Naive thymus-derived CD4-positive, alpha-beta T cell (primary cell): ENCODE measurements at regions of chr5 and their contacts with region 1.

Region 1: DNA sequence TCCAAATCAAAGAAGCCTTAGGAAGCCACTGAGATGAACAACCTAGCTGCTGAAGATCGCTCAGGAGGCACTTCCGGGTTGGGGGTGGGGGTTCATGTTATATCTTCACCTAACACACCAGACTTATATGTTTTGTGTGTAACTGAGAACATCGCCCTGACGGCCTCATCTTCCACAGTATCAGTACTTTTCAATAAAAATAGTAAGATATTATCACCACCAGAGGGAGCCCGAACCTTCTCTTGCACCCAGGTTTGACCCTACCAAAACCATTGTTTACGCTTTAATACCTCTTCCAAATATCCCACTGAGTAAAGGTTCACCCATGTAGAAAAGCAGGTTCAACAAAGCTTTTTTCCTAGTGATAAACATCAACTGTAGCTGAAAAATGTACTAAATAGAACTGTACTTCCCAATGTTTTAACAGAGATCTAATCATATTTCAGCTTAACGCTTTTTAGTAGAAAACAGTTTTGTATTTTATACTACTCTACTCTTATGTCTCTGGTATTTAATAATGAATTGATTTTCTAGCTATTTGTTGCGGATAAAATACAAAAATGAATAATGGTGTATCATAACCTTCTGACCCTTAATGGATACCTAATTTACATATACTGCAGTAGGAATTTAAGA is 244.0 kb downstream of the EPB41L4A start:
- DNase-seq: peak in 5 of 9 donors; percentile 19 to 33 (median 26)
- ATAC-seq: peak; percentile 66
- H3K4me3 ChIP-seq: no peak overlapping the region
- H3K4me3 Mint-ChIP-seq: no peak overlapping the region
- H3K27ac ChIP-seq: no peak overlapping the region
- H3K27ac Mint-ChIP-seq: no peak overlapping the region
- H3K4me1 ChIP-seq: peaks cover 0 to 3% of the 10 kb centered on the region in 2 donors
- H3K4me1 Mint-ChIP-seq: peaks cover 0 to 7% (median 2%) of the 10 kb centered on the region in 7 donors
- H3K27me3 ChIP-seq: no peaks in the 10 kb centered on the region
- H3K27me3 Mint-ChIP-seq: peaks cover 8 to 27% (median 20%) of the 10 kb centered on the region in 5 donors

Region 2: GRCh38 chr5:112154940-112155686 is 20.0 kb before region 1 on chr5:
- CTCF ChIA-PET with region 1: no interaction called
- POLR2A ChIA-PET with region 1: no interaction called
- intact Hi-C with region 1: no loop called
- DNase-seq: no peak
- ATAC-seq: peak; percentile 50
- H3K4me3 ChIP-seq: no peak overlapping the region
- H3K4me3 Mint-ChIP-seq: no peak overlapping the region
- H3K27ac ChIP-seq: no peak overlapping the region
- H3K27ac Mint-ChIP-seq: no peak overlapping the region
- H3K4me1 ChIP-seq: no peaks in the 10 kb centered on the region
- H3K4me1 Mint-ChIP-seq: peaks cover under 1 to 3% (median under 1%) of the 10 kb centered on the region in 7 donors
- H3K27me3 ChIP-seq: no peaks in the 10 kb centered on the region
- H3K27me3 Mint-ChIP-seq: peaks cover 0 to 8% (median under 1%) of the 10 kb centered on the region in 5 donors

Region 3: DNA sequence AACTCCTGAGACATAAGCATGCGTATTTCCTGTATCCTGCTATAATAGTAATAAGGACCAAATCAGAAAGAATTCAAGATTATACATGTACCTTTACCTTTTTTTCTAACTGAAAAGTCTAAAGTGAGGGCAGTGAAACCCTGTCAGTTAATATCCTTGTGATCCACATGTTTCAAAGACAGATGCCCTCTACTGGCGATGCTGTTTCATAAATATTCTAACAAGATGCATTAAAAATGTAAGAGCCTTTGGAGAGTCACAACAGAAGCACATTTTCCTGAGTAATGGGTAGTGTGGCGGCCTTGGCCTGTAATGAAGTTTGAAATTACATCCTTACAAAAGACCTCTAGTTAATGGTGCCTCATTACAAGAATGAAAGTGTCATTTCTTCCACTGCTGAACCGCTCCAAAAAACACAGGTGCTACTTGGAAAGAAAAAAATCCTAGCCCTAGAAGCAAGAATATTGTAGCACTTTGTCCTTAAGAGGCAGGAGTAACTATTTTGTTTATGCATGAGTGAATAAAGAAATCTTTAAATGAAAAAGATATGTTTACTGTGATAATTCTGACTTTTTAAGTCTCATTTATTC is 11.4 kb after region 1 on chr5:
- CTCF ChIA-PET with region 1: interaction called, 5 read pairs
- POLR2A ChIA-PET with region 1: no interaction called
- intact Hi-C with region 1: loop called in 1 of 2 experiments (anchors 1 kb)
- DNase-seq: peak in 3 of 9 donors; percentile 1 to 16 (median 5)
- ATAC-seq: peak; percentile 61
- H3K4me3 ChIP-seq: no peak overlapping the region
- H3K4me3 Mint-ChIP-seq: no peak overlapping the region
- H3K27ac ChIP-seq: no peak overlapping the region
- H3K27ac Mint-ChIP-seq: no peak overlapping the region
- H3K4me1 ChIP-seq: no peaks in the 10 kb centered on the region
- H3K4me1 Mint-ChIP-seq: no peaks in the 10 kb centered on the region
- H3K27me3 ChIP-seq: no peaks in the 10 kb centered on the region
- H3K27me3 Mint-ChIP-seq: peaks cover 27 to 61% (median 43%) of the 10 kb centered on the region in 5 donors

Region 4: DNA sequence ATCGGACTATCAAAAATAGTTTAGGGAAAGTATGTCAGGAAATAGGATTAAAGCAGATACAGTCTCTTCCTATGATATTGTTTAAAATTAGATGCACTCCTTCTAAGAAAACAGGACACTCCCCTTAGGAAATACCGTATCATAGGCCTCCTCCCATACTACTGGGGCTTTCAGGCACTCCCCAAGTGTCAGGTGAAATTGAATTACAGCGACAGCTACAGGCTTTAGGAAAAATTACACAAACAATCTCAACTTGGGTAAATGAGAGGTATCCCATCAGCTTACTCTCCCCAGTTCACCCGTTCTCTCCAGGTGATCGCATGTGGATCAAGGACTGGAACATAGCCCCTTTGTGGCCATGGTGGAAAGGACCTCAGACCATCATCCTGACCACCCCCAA is 354.4 kb after region 1 on chr5:
- CTCF ChIA-PET with region 1: no interaction called
- POLR2A ChIA-PET with region 1: no interaction called
- intact Hi-C with region 1: loop called in 1 of 2 experiments (anchors 1 kb)
- DNase-seq: no peak
- ATAC-seq: no peak
- H3K4me3 ChIP-seq: no peak overlapping the region
- H3K4me3 Mint-ChIP-seq: no peak overlapping the region
- H3K27ac ChIP-seq: no peak overlapping the region
- H3K27ac Mint-ChIP-seq: no peak overlapping the region
- H3K4me1 ChIP-seq: no peaks in the 10 kb centered on the region
- H3K4me1 Mint-ChIP-seq: peaks cover 0 to 13% (median 8%) of the 10 kb centered on the region in 7 donors
- H3K27me3 ChIP-seq: no peaks in the 10 kb centered on the region
- H3K27me3 Mint-ChIP-seq: peaks cover 3 to 16% (median 10%) of the 10 kb centered on the region in 5 donors

Region 5: DNA sequence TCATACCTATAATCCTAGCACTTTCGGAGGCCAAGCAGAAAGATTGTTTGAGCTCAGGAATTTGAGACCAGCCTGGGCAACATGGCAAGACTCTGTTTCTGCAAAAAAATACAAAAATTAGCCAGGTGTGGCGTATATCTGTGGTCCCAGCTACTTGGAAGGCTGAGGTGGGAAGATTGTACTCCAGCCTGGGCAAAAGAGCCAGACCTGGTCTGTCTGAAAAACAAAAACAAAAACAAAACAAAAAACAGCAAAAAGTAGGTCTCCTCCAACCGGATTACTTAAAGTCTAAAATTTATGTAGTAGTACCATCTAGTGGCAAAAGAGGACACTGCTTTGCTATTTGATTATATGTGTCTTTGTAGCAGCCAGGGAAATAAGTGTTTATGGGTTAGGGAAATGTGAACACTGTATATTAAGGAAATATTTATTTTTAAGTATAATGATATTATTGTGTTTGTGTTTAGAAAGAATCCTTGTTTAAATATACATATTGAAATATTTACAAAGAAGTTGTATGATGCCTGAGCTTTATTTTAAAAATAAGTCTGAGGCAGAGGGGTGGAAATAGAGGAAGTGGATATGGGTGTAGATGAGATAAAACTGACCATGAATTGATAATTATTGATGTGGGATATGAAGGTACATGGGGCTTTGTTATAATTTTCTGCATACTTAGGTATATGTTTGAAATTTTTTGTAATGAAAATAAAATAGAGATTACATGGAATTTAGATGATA is 582.6 kb after region 1 on chr5:
- CTCF ChIA-PET with region 1: interaction called, 3 read pairs
- POLR2A ChIA-PET with region 1: no interaction called
- intact Hi-C with region 1: loop called (anchors 1 kb)
- DNase-seq: peak in 7 of 9 donors; percentile 14 to 64 (median 52)
- ATAC-seq: peak; percentile 88
- H3K4me3 ChIP-seq: no peak overlapping the region
- H3K4me3 Mint-ChIP-seq: no peak overlapping the region
- H3K27ac ChIP-seq: no peak overlapping the region
- H3K27ac Mint-ChIP-seq: peak overlapping the region in 5 of 9 donors; percentile 36 to 82 (median 58)
- H3K4me1 ChIP-seq: no peaks in the 10 kb centered on the region
- H3K4me1 Mint-ChIP-seq: peaks cover 3 to 25% (median 18%) of the 10 kb centered on the region in 7 donors
- H3K27me3 ChIP-seq: no peaks in the 10 kb centered on the region
- H3K27me3 Mint-ChIP-seq: no peaks in the 10 kb centered on the region

Region 6: DNA sequence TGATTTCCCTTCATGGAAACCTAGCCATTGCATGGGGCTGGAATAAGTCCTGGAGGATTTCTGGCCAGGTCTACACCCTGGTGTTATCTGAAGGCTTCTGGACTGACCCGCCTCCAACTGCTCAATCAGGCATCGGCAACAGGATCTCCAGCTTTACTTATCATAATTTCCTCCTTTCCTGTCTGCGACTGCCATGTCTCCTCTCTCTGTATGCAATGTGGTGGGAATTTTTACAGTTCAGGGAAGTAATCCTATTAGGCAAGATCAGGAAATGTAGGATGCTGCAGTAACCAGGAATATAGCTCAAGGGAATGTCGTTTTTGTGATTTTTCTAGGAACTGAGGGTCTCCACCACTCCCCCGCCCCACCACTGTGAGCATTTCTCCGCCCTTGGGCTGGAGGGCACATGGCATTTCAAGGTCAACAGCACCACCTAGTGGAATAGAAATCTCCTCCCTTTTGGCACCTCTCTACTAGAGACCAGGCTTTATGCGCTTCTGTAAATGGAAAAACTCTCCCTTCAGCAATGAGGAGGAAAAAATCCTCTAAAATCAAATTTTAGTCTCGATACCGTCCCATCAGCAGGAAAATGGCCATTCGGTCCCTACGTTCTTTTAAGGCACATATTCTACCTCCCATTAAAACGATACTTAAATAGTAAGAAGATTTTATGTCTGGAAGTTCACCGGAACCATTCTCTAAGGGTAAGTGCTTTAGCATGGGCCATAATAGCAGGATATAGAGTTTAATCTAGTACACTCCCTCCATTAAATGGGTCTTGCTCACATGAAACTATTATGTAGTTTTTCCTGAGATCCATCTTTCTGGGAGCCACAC is 1431.4 kb after region 1 on chr5:
- CTCF ChIA-PET with region 1: no interaction called
- POLR2A ChIA-PET with region 1: no interaction called
- intact Hi-C with region 1: loop called (anchors 1 to 5 kb)
- DNase-seq: peak in 8 of 9 donors; percentile 29 to 68 (median 56)
- ATAC-seq: peak; percentile 89
- H3K4me3 ChIP-seq: no peak overlapping the region
- H3K4me3 Mint-ChIP-seq: no peak overlapping the region
- H3K27ac ChIP-seq: no peak overlapping the region
- H3K27ac Mint-ChIP-seq: no peak overlapping the region
- H3K4me1 ChIP-seq: no peaks in the 10 kb centered on the region
- H3K4me1 Mint-ChIP-seq: peaks cover 4 to 10% (median 6%) of the 10 kb centered on the region in 7 donors
- H3K27me3 ChIP-seq: no peaks in the 10 kb centered on the region
- H3K27me3 Mint-ChIP-seq: peaks cover 13 to 38% (median 27%) of the 10 kb centered on the region in 5 donors